ENCODE measurements at regions of chr7 and their contacts with region 1.

Region 1: GRCh38 chr7:153193144-153193595 is 433.6 kb downstream of the ACTR3B start:
- DNase-seq: no peak
- H3K4me3 Mint-ChIP-seq: no peak overlapping the region
- H3K27ac Mint-ChIP-seq: no peak overlapping the region
- H3K4me1 Mint-ChIP-seq: no peaks in the 10 kb centered on the region
- H3K27me3 Mint-ChIP-seq: no peaks in the 10 kb centered on the region
- CTCF ChIP-seq: peak; percentile 70

Region 2: DNA sequence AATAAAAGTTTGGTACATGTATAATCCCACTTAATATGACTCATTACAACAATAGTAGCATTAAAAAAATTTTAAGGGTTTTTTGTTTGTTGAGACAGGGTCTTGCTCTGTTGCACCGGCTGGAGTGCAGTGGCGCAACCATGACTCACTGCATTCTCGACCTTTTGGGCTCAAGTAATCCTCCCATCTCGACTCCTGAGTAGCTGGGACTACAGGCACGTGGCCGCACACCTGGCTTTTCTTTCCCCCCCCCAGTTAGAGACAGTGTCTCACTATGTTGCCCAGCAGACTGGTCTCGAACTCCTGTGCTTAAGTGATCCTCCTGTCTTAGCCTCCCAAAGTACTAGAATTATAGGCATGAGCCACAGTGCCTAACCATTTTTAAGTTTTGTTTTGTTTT is 798.1 kb before region 1 on chr7:
- CTCF ChIA-PET with region 1: no interaction called
- POLR2A ChIA-PET with region 1: no interaction called
- intact Hi-C with region 1: no loop called
- DNase-seq: peak; percentile 76
- H3K4me3 Mint-ChIP-seq: no peak overlapping the region
- H3K27ac Mint-ChIP-seq: no peak overlapping the region
- H3K4me1 Mint-ChIP-seq: peaks cover 20% of the 10 kb centered on the region
- H3K27me3 Mint-ChIP-seq: no peaks in the 10 kb centered on the region
- CTCF ChIP-seq: no peak

Region 3: DNA sequence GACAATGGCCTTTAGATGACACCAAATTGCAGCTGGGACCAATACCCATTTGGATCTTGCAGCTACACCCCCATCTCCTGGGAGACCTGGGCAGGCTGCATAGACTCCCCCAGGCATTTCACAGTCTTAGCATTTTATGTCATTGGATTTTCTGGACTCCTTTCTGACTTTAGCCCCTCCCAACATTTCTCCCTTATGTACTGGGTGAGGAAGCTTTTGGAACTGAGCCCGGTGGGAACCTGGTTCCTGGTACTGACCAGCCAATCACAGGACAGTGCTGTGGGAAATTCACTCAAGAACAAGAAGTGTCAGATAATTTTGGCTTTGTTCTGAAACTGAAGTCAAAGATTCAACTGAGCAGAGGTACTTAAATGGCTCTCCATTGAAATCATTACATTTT is 255.9 kb before region 1 on chr7:
- CTCF ChIA-PET with region 1: no interaction called
- POLR2A ChIA-PET with region 1: no interaction called
- intact Hi-C with region 1: no loop called
- DNase-seq: no peak
- H3K4me3 Mint-ChIP-seq: no peak overlapping the region
- H3K27ac Mint-ChIP-seq: no peak overlapping the region
- H3K4me1 Mint-ChIP-seq: no peaks in the 10 kb centered on the region
- H3K27me3 Mint-ChIP-seq: peaks cover 17% of the 10 kb centered on the region
- CTCF ChIP-seq: no peak

Region 4: GRCh38 chr7:153217032-153217431 is 23.9 kb after region 1 on chr7:
- CTCF ChIA-PET with region 1: no interaction called
- POLR2A ChIA-PET with region 1: no interaction called
- intact Hi-C with region 1: no loop called
- DNase-seq: no peak
- H3K4me3 Mint-ChIP-seq: no peak overlapping the region
- H3K27ac Mint-ChIP-seq: no peak overlapping the region
- H3K4me1 Mint-ChIP-seq: peaks cover 16% of the 10 kb centered on the region
- H3K27me3 Mint-ChIP-seq: no peaks in the 10 kb centered on the region
- CTCF ChIP-seq: no peak

Region 5: GRCh38 chr7:153381275-153382040 is 188.3 kb after region 1 on chr7:
- CTCF ChIA-PET with region 1: no interaction called
- POLR2A ChIA-PET with region 1: no interaction called
- intact Hi-C with region 1: loop called (anchors 1 kb)
- DNase-seq: no peak
- H3K4me3 Mint-ChIP-seq: no peak overlapping the region
- H3K27ac Mint-ChIP-seq: peak overlapping the region; percentile 2
- H3K4me1 Mint-ChIP-seq: peaks cover 5% of the 10 kb centered on the region
- H3K27me3 Mint-ChIP-seq: no peaks in the 10 kb centered on the region
- CTCF ChIP-seq: peak; percentile 81

Measured in MCF 10A (cell line).